ENCODE measurements at regions of chr9 and their contacts with region 1.

Region 1: DNA sequence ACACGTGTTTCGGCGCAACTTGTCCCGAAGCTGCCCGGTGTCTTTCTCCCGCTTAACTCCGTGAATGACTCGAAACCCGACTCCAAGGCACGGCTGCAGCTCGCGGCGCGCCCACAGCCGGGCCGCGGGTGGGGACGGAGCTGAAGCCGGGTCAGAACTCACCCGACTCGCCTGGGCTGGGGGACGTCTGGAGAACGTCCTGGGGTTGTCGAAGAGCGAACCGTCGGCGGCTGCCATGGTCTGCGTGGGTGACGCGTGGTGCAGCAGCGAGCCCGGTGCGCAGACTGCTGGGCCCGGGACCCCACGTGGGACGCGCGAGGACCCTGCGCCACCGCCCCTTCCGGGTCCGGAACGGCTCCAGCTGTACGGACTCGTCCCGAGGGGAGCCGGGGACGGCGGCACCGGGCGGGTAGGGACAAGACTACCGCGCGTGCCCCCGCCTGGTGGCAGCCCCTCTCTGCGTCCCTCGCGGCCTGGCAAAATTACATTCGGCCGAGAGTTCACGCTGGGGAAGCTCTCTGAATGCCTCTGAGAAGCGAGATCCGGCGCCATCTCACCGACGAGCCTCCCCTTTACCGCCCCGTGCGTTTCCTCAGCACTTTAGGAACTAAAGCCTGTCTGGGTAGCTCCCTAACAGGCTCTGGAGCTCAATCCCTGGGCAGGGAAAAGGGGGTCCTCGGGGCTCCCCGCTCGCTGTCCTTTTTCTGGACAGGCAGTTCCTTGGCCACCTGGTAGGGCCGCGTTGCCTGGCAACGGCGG is at the start of gene DDX31:
- DNase-seq: peak; percentile 80
- H3K4me3 ChIP-seq: peak within 1 kb of the TSS; percentile 50 to 95 (median 91)
- H3K27ac ChIP-seq: peak within 1 kb of the TSS; percentile 82
- H3K4me1 ChIP-seq: peaks cover 23% of the 10 kb centered on the region
- H3K27me3 ChIP-seq: no peaks in the 10 kb centered on the region
- CTCF ChIP-seq: peak in 1 of 2 donors; percentile 4
- total RNA-seq, gene DDX31: 22.7 to 27.0 TPM

Region 2: DNA sequence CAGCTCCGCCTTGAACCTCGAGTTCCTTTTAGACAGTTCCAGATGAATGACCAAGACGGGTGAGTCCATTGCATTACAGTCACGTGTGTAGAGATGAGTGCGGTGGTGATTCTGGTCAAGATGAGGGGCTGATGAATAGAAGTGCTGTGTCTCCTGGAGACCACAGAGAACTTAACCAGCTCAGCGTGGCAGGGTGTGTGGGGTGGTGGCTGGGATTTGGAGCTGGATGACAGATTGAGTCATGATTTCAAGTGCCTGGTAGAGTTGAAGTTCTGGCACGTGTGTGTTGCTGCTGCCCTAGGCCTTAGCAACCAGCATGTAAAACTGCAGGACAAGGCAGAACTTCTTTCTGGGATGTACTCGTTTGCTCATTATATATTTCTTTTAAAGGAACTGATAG is 1222.7 kb before region 1 on chr9:
- CTCF ChIA-PET with region 1: no interaction called
- dilution Hi-C with region 1: no loop called
- in situ Hi-C with region 1: no loop called
- intact Hi-C with region 1: no loop called
- DNase-seq: peak; percentile 20
- H3K4me3 ChIP-seq: no peak overlapping the region
- H3K27ac ChIP-seq: no peak overlapping the region
- H3K4me1 ChIP-seq: no peaks in the 10 kb centered on the region
- H3K27me3 ChIP-seq: no peaks in the 10 kb centered on the region
- CTCF ChIP-seq: no peak

Region 3: DNA sequence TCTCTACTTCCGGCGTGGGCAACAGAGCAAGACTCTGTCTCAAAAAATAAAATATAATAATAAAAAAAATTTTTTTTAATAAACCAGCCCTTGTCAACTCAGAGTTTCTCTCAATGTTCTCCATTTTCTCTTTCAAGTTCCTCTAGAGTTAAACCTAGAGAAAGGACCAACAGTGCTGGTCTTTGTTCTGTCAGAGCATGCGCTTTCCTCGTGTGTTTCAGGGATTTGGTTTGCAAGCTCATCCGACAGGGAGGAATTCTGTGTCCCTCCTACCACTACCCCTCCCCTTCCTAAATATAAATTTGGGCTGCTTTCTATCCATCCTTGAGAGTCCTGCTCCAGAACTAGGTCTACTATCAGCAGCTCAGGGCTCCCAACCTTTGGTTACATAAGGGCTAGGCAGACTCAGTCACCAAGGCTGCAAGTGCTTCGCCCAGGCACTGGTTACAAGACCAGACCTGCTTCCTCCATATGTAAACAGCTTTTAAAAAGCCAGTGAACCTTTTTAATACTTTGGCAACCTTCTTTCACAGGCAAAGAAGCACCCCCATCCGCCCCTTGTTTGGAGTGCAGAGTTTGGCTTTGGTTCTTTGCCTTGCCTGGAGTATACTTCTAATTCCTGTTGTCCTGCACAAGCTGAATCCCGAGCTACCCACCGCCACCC is 328.6 kb before region 1 on chr9:
- CTCF ChIA-PET with region 1: no interaction called
- dilution Hi-C with region 1: no loop called
- in situ Hi-C with region 1: no loop called
- intact Hi-C with region 1: no loop called
- DNase-seq: peak; percentile 8
- H3K4me3 ChIP-seq: no peak overlapping the region
- H3K27ac ChIP-seq: no peak overlapping the region
- H3K4me1 ChIP-seq: no peaks in the 10 kb centered on the region
- H3K27me3 ChIP-seq: no peaks in the 10 kb centered on the region
- CTCF ChIP-seq: no peak

Region 4: DNA sequence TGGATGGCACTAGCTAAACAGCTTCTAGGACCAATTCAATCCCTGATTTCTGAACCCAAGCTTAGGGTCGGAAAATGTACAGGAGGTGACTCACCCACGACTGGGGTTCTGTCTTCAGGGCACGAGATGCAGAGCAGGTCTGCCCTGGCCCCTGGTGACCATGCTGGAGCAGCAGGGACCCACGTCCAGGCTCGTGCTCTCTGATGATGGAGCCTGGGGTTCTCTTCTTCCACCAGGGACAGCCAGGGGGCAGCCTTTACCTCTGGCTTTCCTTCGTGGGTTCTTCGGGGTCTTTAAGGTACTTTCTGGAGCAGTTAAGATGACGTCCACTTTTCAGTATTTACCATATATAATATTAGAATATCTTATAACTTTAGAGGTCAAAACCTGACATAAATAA is 257.8 kb before region 1 on chr9:
- CTCF ChIA-PET with region 1: no interaction called
- dilution Hi-C with region 1: no loop called
- in situ Hi-C with region 1: no loop called
- intact Hi-C with region 1: loop called (anchors 2 kb)
- DNase-seq: peak; percentile 9
- H3K4me3 ChIP-seq: no peak overlapping the region
- H3K27ac ChIP-seq: no peak overlapping the region
- H3K4me1 ChIP-seq: peaks cover 22% of the 10 kb centered on the region
- H3K27me3 ChIP-seq: peaks cover 3% of the 10 kb centered on the region
- CTCF ChIP-seq: peak; percentile 46 to 62

Region 5: GRCh38 chr9:132651254-132651653 is 18.6 kb before region 1 on chr9:
- CTCF ChIA-PET with region 1: no interaction called
- dilution Hi-C with region 1: no loop called
- in situ Hi-C with region 1: no loop called
- intact Hi-C with region 1: loop called (anchors 2 kb)
- DNase-seq: peak; percentile 86
- H3K4me3 ChIP-seq: no peak overlapping the region
- H3K27ac ChIP-seq: peak overlapping the region; percentile 7
- H3K4me1 ChIP-seq: peaks cover 38% of the 10 kb centered on the region
- H3K27me3 ChIP-seq: no peaks in the 10 kb centered on the region
- CTCF ChIP-seq: peak; percentile 64 to 72

Region 6: GRCh38 chr9:132698989-132699388 is 29.1 kb after region 1 on chr9:
- CTCF ChIA-PET with region 1: no interaction called
- dilution Hi-C with region 1: no loop called
- in situ Hi-C with region 1: no loop called
- intact Hi-C with region 1: no loop called
- DNase-seq: no peak
- H3K4me3 ChIP-seq: no peak overlapping the region
- H3K27ac ChIP-seq: no peak overlapping the region
- H3K4me1 ChIP-seq: no peaks in the 10 kb centered on the region
- H3K27me3 ChIP-seq: no peaks in the 10 kb centered on the region
- CTCF ChIP-seq: no peak

Region 7: GRCh38 chr9:132768932-132769905 is 99.3 kb after region 1 on chr9:
- CTCF ChIA-PET with region 1: no interaction called
- dilution Hi-C with region 1: no loop called
- in situ Hi-C with region 1: no loop called
- intact Hi-C with region 1: loop called (anchors 10 kb)
- DNase-seq: peak; percentile 32
- H3K4me3 ChIP-seq: peak overlapping the region; percentile 61 to 80 (median 75)
- H3K27ac ChIP-seq: peak overlapping the region; percentile 34
- H3K4me1 ChIP-seq: no peaks in the 10 kb centered on the region
- H3K27me3 ChIP-seq: no peaks in the 10 kb centered on the region
- CTCF ChIP-seq: peak; percentile 30 to 37

Region 8: DNA sequence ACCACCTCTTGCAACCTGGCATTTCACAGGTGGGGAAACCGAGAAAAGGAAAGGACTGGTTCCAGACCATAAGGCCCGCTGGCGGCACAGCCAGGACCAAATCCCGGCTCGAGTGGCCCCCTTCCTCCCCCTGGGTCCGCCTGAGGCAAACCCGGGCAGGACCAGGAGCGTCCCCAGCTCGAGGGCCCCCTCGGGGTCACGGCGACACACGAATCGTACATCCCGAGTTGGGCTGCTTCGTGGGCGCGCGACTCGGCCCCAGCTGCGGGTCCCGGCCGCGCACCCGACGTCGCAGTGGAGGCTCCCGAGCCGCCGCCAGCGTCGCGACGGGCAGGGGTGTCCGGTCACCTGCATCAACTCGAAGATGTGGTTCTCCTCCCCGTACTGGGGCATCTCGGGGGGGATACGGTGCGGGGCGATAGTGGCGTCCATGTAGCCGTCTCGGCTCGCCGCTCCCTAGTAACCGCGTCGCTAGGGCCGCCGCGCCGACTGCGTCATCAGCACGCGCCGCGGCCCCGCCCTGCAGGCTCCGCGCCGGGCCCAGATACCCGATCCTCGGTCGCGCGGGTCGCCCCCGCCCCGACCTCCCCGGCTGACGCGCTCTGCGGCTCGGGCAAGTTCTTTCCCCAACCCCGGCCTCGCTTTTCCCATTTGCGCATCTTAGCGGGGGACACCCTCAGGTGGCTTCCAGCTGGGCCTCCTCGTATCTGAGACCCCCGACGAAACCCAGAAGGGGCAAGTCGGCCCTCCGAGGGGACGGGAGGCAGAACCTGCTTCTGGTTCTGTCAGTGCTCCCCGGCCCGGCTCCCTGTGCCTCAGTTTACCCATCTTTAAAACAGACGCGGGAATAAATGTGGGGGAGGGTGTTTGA is 208.2 kb after region 1 on chr9 and contains the start of gene AK8:
- CTCF ChIA-PET with region 1: no interaction called
- dilution Hi-C with region 1: no loop called
- in situ Hi-C with region 1: no loop called
- intact Hi-C with region 1: loop called (anchors 10 kb)
- DNase-seq: peak; percentile 65
- H3K4me3 ChIP-seq: peak within 1 kb of the TSS; percentile 91 to 99 (median 96)
- H3K27ac ChIP-seq: peak within 1 kb of the TSS; percentile 91
- H3K4me1 ChIP-seq: peaks cover 3% of the 10 kb centered on the region
- H3K27me3 ChIP-seq: no peaks in the 10 kb centered on the region
- CTCF ChIP-seq: no peak
- total RNA-seq, gene AK8: 1.1 to 1.2 TPM

Measured in mammary epithelial cell (primary cell).